ENCODE measurements at regions of chr15 and their contacts with region 1.

Region 1: GRCh38 chr15:78131295-78132061 is at the start of gene CIB2:
- DNase-seq: peak in 1 of 2 donors; percentile 83
- H3K4me3 ChIP-seq: peak within 1 kb of the TSS; percentile 53 to 71
- H3K27ac ChIP-seq: peak within 1 kb of the TSS; percentile 71 to 79
- H3K4me1 ChIP-seq: peaks cover 0 to 12% of the 10 kb centered on the region in 2 donors
- H3K27me3 ChIP-seq: no peaks in the 10 kb centered on the region
- CTCF ChIP-seq: peak; percentile 56 to 91 (median 67)
- total RNA-seq, gene CIB2: 6.7 TPM

Region 2: DNA sequence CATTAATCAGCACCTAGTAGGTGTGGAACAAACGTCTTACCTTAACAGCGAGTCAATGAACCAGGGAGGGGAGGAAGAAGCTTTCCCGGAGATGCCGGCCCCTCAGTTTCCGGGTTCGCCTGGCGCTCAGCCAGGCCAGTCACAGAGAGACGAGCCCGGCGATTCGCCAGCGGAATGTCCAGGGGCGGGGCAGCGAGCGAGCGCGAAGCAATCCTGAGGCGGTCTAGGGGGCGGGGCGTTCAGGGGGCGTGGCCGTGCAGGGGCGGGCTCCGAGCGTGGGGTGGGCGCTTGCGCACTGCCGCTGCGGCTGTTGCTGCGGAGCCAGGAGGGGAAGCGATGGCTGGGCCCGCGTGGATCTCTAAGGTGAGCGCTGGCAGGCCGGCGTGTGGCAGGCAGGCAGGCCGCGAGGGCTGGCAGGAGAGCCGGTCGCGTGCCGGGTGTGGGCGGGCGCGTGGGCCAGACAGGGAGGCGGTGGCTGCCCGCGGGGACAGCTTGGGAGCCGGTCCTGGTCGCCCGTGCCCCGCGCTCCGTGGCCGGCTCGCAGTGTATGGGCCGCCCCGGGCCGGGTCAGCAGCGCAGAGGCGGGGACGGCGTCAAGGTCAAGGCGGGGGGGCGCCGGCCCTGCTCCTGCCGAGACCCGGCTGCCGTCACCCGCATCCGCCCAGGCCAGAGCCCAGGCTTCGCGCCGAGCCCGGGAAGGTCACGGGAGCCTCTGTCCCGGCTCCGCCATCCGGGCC is 17.8 kb after region 1 on chr15 and contains the start of gene IDH3A:
- intact Hi-C with region 1: loop called (anchors 1 kb)
- DNase-seq: peak; percentile 91 to 99
- H3K4me3 ChIP-seq: peak within 1 kb of the TSS; percentile 79 to 90
- H3K27ac ChIP-seq: peak within 1 kb of the TSS; percentile 81 to 87
- H3K4me1 ChIP-seq: peaks cover 5 to 14% of the 10 kb centered on the region in 2 donors
- H3K27me3 ChIP-seq: no peaks in the 10 kb centered on the region
- CTCF ChIP-seq: no peak
- total RNA-seq, gene IDH3A: 17.7 TPM

Region 3: DNA sequence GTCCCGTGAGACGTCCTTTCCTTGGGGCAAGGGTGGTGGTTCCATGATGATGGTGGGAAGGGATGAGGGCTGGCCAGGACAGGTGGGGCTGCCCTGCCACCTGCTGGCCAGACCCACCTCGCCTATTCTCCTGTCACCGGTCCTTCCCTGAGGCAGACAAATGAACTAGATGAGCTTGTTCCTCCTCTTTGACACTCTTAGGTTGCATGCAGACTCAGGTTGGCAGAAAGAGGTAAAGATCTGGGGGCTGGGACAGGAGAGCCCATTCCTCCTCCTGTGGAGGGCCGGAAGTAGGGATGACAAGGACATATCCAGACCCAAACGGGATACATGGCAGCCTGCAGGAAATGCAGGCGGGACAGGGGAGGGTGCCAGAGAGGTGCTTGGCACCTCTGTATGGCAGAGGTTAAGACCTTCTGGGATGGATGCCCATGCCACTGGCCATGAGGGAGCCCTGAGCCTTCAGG is 64.3 kb after region 1 on chr15:
- intact Hi-C with region 1: loop called (anchors 1 kb)
- DNase-seq: peak in 1 of 2 donors; percentile 63
- H3K4me3 ChIP-seq: no peak overlapping the region
- H3K27ac ChIP-seq: no peak overlapping the region
- H3K4me1 ChIP-seq: no peaks in the 10 kb centered on the region
- H3K27me3 ChIP-seq: no peaks in the 10 kb centered on the region
- CTCF ChIP-seq: peak; percentile 60 to 69 (median 63)

Region 4: DNA sequence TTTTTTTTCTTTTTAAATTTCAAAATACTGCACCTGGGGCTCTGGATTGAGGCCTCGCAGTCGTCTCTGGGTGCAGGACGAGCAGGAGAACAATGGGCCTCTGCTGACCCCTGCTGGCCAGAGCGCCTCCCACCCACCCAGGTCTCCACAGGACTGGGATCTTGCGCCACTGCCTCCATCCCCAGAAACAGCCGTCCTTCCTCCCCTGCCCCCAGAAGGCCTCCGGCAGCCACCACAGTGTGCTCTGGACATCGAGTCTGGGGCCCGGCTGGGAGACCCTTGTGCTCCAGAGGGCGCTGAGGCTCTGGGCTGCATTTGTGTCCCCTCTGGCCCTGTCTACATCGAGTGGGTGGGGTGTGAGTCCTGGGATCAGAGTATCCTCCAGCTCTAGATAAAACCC is 109.5 kb after region 1 on chr15:
- intact Hi-C with region 1: loop called (anchors 1 kb)
- DNase-seq: peak in 1 of 2 donors; percentile 86
- H3K4me3 ChIP-seq: no peak overlapping the region
- H3K27ac ChIP-seq: no peak overlapping the region
- H3K4me1 ChIP-seq: no peaks in the 10 kb centered on the region
- H3K27me3 ChIP-seq: no peaks in the 10 kb centered on the region
- CTCF ChIP-seq: peak; percentile 72 to 87 (median 84)

Region 5: GRCh38 chr15:78422571-78423340 is 291.3 kb after region 1 on chr15:
- intact Hi-C with region 1: no loop called
- DNase-seq: peak in 1 of 2 donors; percentile 67
- H3K4me3 ChIP-seq: no peak overlapping the region
- H3K27ac ChIP-seq: no peak overlapping the region
- H3K4me1 ChIP-seq: no peaks in the 10 kb centered on the region
- H3K27me3 ChIP-seq: no peaks in the 10 kb centered on the region
- CTCF ChIP-seq: peak; percentile 52 to 86 (median 85)

Measured in ascending aorta (tissue), 2 donors.